Ascending aorta (tissue), 2 donors: ENCODE measurements at regions of chr20 and their contacts with region 1.

Region 1: DNA sequence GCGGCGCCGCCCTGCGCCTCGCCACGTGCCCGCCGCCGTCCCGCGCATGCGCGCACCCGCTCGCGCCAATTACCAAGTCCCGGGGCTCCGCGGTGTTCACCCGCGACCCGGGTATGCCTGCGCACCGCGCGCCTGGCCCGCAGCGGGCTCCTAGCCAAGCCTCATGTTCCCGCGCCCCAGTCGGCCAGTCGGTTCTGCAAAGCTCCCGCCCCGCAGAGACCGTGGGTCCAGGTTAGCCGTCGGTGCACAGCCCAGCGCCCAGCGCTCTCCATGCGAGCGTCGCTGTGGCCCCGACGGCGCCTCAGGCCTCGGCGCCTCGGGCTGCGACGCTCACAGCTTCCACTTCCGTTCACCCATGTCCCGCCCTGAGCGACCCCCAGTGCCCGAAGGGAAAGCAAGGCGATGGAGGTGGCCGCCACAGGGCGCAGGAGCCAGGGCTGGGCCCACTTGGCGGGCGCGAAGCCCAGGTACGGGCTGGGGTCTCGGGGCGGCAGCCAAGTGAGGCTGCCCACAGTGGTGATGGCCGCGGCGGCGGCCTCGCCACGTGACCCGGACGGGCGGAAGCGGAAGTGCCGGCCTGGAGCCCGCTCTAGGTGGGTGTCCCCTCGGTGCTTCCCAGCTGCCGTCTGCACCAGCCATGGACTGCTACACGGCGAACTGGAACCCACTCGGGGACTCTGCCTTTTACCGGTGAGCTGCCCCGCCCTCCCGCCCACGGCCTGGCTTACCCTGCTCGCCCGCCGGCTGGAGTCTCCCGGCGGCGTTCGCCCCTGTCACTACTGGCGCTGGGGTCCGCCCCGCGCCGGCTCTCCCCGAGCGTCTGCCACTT is at the starts of genes PCED1A and VPS16:
- DNase-seq: peak; percentile 37 to 92
- H3K4me3 ChIP-seq: peak within 1 kb of the TSS; percentile 73 to 87
- H3K27ac ChIP-seq: peak within 1 kb of the TSS; percentile 86 to 89
- H3K4me1 ChIP-seq: peaks cover 5% of the 10 kb centered on the region in 2 donors
- H3K27me3 ChIP-seq: no peaks in the 10 kb centered on the region
- CTCF ChIP-seq: no peak
- total RNA-seq, gene PCED1A: 49.7 TPM
- total RNA-seq, gene VPS16: 61.1 TPM

Region 2: DNA sequence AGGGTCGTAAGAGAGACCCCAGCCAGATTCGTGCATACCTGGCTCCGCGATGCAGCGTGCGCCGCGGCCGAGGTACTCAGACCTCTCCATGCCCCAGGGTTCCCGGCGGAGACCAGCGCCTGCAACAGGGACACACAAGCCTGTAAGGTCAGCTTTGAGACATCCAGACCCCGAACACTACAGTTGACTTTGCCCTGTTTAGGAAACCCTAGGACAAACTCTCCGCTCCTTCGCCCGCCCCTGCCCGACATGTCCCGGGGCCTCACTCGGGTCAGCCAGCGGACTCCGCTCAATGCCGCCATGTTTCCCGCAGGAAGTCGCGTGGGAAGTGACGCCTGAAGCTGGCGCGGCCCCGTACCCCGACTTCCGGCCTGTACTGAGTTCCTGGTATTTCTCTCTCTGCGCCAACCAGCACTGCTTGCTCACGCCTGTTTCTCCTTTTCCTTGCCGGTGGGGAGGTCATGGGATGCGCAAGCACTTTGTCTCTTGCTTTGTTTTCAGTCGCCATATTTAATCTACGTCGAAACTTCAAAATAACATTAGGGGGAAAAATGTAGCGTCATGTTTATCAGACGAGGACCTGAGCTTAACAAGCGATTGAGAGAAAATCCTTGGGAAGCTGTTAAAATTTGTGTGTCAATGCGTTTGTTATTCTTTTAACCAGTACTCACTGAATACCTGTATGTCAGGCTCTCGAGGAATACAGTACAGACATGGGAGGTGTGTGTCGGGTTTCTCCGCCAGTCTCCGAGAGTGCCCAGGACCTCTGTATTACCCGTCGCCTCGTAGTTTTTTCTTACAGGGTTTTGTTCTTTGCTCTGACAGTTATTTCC is 176.2 kb before region 1 on chr20 and contains the start of gene IDH3B:
- intact Hi-C with region 1: no loop called
- DNase-seq: peak; percentile 80 to 97
- H3K4me3 ChIP-seq: peak within 1 kb of the TSS; percentile 77 to 81
- H3K27ac ChIP-seq: peak within 1 kb of the TSS; percentile 82 to 86
- H3K4me1 ChIP-seq: peaks cover 3 to 10% of the 10 kb centered on the region in 2 donors
- H3K27me3 ChIP-seq: no peaks in the 10 kb centered on the region
- CTCF ChIP-seq: no peak
- total RNA-seq, gene IDH3B: 24.9 TPM

Region 3: GRCh38 chr20:2752567-2753460 is 87.5 kb before region 1 on chr20:
- intact Hi-C with region 1: loop called (anchors 5 kb)
- DNase-seq: peak in 1 of 2 donors; percentile 65
- H3K4me3 ChIP-seq: peak overlapping the region; percentile 62
- H3K27ac ChIP-seq: no peak overlapping the region
- H3K4me1 ChIP-seq: peaks cover 13 to 14% of the 10 kb centered on the region in 2 donors
- H3K27me3 ChIP-seq: peaks cover 3% of the 10 kb centered on the region
- CTCF ChIP-seq: peak; percentile 27 to 60 (median 50)

Region 4: GRCh38 chr20:2865630-2866029 is 25.3 kb after region 1 on chr20:
- intact Hi-C with region 1: loop called (anchors 1 kb)
- DNase-seq: no peak
- H3K4me3 ChIP-seq: no peak overlapping the region
- H3K27ac ChIP-seq: no peak overlapping the region
- H3K4me1 ChIP-seq: no peaks in the 10 kb centered on the region
- H3K27me3 ChIP-seq: no peaks in the 10 kb centered on the region
- CTCF ChIP-seq: no peak

Region 5: GRCh38 chr20:2873010-2873746 is 32.8 kb after region 1 on chr20 and contains the start of gene PTPRA:
- intact Hi-C with region 1: loop called (anchors 1 kb)
- DNase-seq: peak; percentile 71 to 94
- H3K4me3 ChIP-seq: peak within 1 kb of the TSS; percentile 81 to 96
- H3K27ac ChIP-seq: peak within 1 kb of the TSS; percentile 62 to 66
- H3K4me1 ChIP-seq: peaks cover 4 to 8% of the 10 kb centered on the region in 2 donors
- H3K27me3 ChIP-seq: no peaks in the 10 kb centered on the region
- CTCF ChIP-seq: no peak
- total RNA-seq, gene PTPRA: 24.2 TPM

Region 6: GRCh38 chr20:3165406-3166337 is 325.3 kb after region 1 on chr20:
- intact Hi-C with region 1: no loop called
- DNase-seq: no peak
- H3K4me3 ChIP-seq: no peak overlapping the region
- H3K27ac ChIP-seq: no peak overlapping the region
- H3K4me1 ChIP-seq: no peaks in the 10 kb centered on the region
- H3K27me3 ChIP-seq: no peaks in the 10 kb centered on the region
- CTCF ChIP-seq: no peak